AG04450 (cell line): ENCODE measurements at regions of chr17 and their contacts with region 1.

Region 1: GRCh38 chr17:39153599-39154051 is 2.2 kb upstream of the PLXDC1 start:
- DNase-seq: peak; percentile 78
- H3K4me3 ChIP-seq: peak overlapping the region; percentile 94
- H3K27ac ChIP-seq: peak overlapping the region; percentile 61
- H3K27me3 ChIP-seq: peaks cover 26% of the 10 kb centered on the region
- CTCF ChIP-seq: no peak; the same call in 1 of the 2 replicates

Region 2: DNA sequence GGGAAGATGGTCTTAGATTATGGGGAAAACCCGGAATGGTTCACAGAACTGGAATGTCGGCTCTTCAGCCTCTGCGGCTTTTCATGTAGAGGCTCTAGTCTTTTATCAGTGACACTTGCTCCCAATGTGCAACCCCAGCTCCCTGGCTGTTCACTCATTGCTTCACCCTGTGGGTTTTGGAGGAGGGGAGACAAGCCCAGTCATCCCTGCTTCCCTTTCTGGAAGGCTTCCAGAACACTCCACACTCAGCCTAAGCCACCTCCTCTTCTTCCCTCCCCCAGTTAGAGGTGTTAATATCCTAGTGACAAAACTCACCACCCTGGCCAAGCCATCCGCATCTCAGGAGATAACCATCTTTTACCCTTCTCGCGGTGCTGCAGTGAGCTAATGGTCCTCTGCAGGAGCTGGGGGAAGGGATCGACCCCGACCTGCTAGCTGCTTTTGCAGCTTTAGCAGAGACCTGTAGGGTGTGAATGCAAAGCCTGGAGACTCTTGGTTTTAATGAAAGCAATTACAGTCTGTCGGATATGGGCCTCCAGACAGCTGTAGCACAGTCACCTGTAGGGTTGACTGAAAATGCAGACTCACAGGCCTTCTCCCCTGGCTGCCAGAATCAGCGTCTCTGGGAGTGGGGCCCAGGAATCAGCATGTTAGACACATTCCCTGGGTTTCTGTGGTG is 252.5 kb before region 1 on chr17:
- CTCF ChIA-PET with region 1: interaction called, 11 read pairs
- POLR2A ChIA-PET with region 1: interaction called, 5 read pairs
- DNase-seq: peak; percentile 88
- H3K4me3 ChIP-seq: no peak overlapping the region
- H3K27ac ChIP-seq: peak overlapping the region; percentile 40
- H3K27me3 ChIP-seq: no peaks in the 10 kb centered on the region
- CTCF ChIP-seq: no peak

Region 3: GRCh38 chr17:38907930-38908675 is 245.5 kb before region 1 on chr17:
- CTCF ChIA-PET with region 1: interaction called, 11 read pairs
- POLR2A ChIA-PET with region 1: interaction called, 4 read pairs
- DNase-seq: no peak
- H3K4me3 ChIP-seq: no peak overlapping the region
- H3K27ac ChIP-seq: no peak overlapping the region
- H3K27me3 ChIP-seq: no peaks in the 10 kb centered on the region
- CTCF ChIP-seq: no peak

Region 4: DNA sequence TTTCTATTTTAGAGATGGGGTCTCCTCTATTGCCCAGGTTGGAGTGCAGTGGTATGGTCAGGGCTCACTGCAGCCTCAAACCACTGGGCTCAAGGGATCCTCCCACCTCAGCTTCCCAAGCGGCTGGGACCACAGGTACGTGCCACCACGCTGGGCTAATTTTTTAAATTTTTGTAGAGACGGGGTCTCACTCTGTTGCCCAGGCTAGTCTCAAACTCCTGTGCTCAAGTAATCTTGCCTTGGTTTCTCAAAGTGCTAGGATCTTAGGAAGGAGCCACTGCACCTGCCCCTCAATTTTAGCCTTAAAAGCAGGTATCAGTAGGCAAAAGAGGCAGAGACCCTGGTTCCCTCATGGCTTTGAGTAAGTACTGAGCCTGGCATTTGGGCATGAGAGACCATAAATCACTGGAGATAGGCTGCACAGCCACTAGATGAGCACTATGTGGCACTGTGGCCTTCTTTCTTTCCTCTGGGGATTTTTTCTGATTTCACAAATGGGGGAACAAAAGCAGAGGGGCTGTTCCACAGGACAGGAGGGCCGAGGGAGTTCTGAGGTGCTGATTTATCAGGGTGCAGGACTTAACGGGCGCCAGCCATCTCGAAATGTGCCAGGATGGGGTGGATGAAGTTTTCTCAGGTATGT is 84.4 kb before region 1 on chr17:
- CTCF ChIA-PET with region 1: interaction called, 22 read pairs
- POLR2A ChIA-PET with region 1: no interaction called
- DNase-seq: no peak
- H3K4me3 ChIP-seq: no peak overlapping the region
- H3K27ac ChIP-seq: no peak overlapping the region
- H3K27me3 ChIP-seq: peaks cover 49% of the 10 kb centered on the region
- CTCF ChIP-seq: peak; percentile 77

Region 5: GRCh38 chr17:39115135-39115534 is 38.5 kb before region 1 on chr17:
- CTCF ChIA-PET with region 1: interaction called, 10 read pairs
- POLR2A ChIA-PET with region 1: interaction called, 3 read pairs
- DNase-seq: no peak
- H3K4me3 ChIP-seq: no peak overlapping the region
- H3K27ac ChIP-seq: peak overlapping the region; percentile 61
- H3K27me3 ChIP-seq: peaks cover 18% of the 10 kb centered on the region
- CTCF ChIP-seq: no peak

Region 6: DNA sequence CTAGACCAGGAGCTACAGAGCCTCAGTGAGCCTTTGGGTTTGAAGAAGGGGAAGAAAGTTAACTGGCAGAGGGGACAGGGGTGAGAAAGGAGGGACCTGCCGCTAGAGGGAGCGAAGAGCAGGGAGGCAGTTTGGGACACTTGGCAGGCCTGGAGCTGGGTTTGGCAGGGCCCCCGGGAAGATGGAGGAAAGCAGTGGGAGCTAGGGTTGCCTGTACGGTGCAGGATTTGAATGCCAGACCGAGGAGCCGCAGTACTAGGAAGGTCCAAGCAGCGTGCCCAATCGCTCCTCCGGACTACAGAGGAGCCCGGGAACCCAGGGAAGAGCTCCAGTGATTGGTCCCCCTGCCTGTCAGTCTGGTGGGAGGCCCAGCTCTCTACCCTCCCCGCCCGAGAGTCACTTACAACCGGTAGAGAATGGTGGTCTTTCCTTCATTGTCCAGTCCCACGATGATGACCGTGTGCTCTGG is 11.1 kb after region 1 on chr17:
- CTCF ChIA-PET with region 1: interaction called, 25 read pairs
- POLR2A ChIA-PET with region 1: interaction called, 3 read pairs
- DNase-seq: peak; percentile 76
- H3K4me3 ChIP-seq: peak overlapping the region; percentile 63
- H3K27ac ChIP-seq: no peak overlapping the region
- H3K27me3 ChIP-seq: peaks cover 32% of the 10 kb centered on the region
- CTCF ChIP-seq: peak; percentile 87

Region 7: DNA sequence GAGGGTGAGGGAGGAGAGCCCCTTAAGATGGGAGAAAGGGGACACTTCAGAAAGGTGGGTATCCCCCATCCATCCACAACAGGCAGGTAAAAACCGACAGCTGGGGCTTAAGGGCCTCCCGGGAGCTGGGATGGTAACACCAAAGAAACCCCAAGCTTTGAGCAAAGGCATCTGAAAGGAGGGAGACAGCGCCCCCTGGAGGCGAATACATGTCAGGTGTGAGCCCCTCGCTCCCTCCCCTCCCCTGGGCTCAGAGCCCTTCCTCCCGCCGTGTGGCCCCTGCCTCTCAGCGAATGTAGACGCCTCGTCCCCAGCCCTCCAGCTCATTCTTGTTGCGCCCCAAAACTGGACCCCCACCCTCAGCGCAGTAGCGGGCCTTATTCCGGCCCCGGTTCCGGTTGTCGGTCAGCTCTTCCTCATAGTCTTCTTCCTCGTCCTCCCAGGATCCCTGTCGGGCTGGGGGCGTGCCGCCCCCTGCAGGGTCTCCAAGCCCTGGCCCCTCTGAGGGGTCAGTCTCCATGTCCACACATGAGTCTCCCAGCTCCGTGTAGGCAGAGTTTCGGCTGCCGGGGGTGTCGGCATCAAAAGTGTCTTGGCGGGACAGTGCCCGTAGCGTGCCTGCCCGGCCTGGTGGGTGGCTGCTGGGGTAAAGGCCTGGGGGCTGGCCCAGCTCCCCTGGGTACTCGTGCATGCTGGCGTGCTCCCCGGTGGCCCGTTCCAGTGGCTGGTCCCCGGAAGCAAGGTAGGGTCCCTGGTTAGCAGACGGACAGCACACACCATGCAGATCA is 21.5 kb after region 1 on chr17:
- CTCF ChIA-PET with region 1: interaction called, 31 read pairs
- POLR2A ChIA-PET with region 1: interaction called, 3 read pairs
- DNase-seq: no peak
- H3K4me3 ChIP-seq: no peak overlapping the region
- H3K27ac ChIP-seq: no peak overlapping the region
- H3K27me3 ChIP-seq: no peaks in the 10 kb centered on the region
- CTCF ChIP-seq: peak; percentile 78